Calu3 (cell line): ENCODE measurements at regions of chr15 and their contacts with region 1.

Region 1: DNA sequence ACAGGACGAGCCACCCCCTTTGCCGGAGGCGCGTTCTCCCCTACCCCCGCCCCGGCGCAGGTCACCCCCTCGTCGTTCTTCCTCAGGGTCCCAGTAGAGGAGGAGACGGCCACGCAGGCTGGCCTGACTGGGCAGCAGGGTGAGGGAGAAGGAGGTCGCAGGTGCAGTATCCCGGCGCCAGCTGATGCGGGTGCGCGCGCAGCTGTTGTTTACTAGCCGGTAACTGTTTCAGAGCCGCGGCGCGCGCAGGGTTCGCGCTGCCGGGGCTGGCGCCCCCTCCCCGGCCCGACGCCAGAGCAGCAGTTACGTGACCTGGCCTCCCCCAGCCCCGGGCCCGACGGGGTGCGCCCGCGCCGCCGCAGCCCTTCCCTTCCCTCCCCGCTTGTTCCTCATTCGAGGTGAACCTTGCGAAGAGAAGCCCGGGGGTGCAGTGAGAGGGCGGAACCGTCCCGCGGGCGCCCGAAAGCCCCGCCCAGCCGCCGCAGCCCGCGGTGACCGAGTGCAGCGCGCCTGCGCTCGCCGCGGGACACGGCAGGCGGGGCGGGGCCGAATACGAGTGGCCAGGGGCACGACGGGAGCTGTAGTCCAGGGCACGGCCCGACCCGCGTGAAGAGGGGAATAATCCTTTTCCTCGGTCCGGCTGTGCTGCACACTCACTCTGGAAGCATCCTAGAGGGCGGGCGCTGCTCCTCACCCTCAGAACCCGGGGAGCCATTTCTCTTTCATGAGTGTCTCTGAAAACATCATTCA is at the start of gene SLC12A6:
- DNase-seq: peak; percentile 80
- H3K4me3 Mint-ChIP-seq: peak within 1 kb of the TSS; percentile 71
- H3K27ac Mint-ChIP-seq: peak within 1 kb of the TSS; percentile 30
- H3K4me1 Mint-ChIP-seq: peaks cover 7% of the 10 kb centered on the region
- H3K27me3 Mint-ChIP-seq: no peaks in the 10 kb centered on the region
- CTCF ChIP-seq: no peak
- total RNA-seq, gene SLC12A6: 3.8 and 4.2 TPM in 2 replicates

Region 2: GRCh38 chr15:34085746-34086145 is 252.0 kb before region 1 on chr15:
- CTCF ChIA-PET with region 1: interaction called, 14 read pairs
- intact Hi-C with region 1: no loop called
- DNase-seq: no peak
- H3K4me3 Mint-ChIP-seq: no peak overlapping the region
- H3K27ac Mint-ChIP-seq: no peak overlapping the region
- H3K4me1 Mint-ChIP-seq: no peaks in the 10 kb centered on the region
- H3K27me3 Mint-ChIP-seq: no peaks in the 10 kb centered on the region
- CTCF ChIP-seq: no peak

Region 3: GRCh38 chr15:34223904-34224596 is 113.7 kb before region 1 on chr15:
- CTCF ChIA-PET with region 1: no interaction called
- intact Hi-C with region 1: loop called (anchors 10 kb)
- DNase-seq: no peak
- H3K4me3 Mint-ChIP-seq: peak overlapping the region; percentile 83
- H3K27ac Mint-ChIP-seq: peak overlapping the region; percentile 98
- H3K4me1 Mint-ChIP-seq: no peaks in the 10 kb centered on the region
- H3K27me3 Mint-ChIP-seq: no peaks in the 10 kb centered on the region
- CTCF ChIP-seq: no peak